ENCODE measurements at regions of chr6 and their contacts with region 1.

Region 1: GRCh38 chr6:32868257-32868788 is 14.3 kb downstream of the PSMB9 start:
- DNase-seq: peak; percentile 90
- H3K4me3 Mint-ChIP-seq: no peak overlapping the region
- H3K27ac Mint-ChIP-seq: no peak overlapping the region
- H3K4me1 Mint-ChIP-seq: peaks cover 33% of the 10 kb centered on the region
- H3K27me3 Mint-ChIP-seq: no peaks in the 10 kb centered on the region

Region 2: DNA sequence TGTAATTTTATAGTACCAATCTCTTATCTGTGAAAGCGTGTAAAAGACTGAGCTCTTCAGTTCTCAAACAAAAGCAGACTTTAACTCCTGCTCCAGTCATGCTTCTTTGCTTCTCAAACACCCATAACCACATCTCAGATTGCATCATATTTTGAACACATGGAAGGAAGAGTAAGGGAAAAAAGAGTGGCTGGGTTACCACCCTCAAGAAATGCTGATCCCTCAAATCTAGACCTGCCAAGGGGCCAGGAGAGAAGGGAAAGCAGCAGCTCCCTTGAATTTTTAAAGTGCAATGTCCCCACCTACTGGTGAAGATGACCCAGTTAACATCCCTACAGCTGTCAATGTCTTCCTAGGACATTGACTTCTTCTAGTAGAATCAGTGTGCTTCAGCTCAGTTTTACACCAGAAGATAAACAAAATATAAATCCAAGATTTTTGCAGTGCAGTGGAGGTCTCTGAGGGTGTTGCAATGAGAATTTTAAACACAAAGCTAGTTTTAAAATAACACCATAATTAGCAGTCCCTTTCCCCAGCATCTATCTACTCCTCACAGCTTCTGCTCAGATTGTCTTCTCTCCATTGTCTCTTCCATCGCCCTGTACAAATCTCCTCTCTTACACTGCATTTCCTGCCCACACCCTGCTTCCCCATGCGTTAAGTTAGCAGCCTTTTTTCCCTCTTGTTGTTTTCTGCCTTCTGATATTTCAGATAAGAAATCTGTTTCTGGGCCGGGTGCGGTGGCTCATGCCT is 82.4 kb before region 1 on chr6:
- CTCF ChIA-PET with region 1: interaction called, 29 read pairs
- POLR2A ChIA-PET with region 1: no interaction called
- intact Hi-C with region 1: no loop called
- DNase-seq: peak; percentile 21
- H3K4me3 Mint-ChIP-seq: no peak overlapping the region
- H3K27ac Mint-ChIP-seq: no peak overlapping the region
- H3K4me1 Mint-ChIP-seq: no peaks in the 10 kb centered on the region
- H3K27me3 Mint-ChIP-seq: peaks cover 42% of the 10 kb centered on the region

Region 3: DNA sequence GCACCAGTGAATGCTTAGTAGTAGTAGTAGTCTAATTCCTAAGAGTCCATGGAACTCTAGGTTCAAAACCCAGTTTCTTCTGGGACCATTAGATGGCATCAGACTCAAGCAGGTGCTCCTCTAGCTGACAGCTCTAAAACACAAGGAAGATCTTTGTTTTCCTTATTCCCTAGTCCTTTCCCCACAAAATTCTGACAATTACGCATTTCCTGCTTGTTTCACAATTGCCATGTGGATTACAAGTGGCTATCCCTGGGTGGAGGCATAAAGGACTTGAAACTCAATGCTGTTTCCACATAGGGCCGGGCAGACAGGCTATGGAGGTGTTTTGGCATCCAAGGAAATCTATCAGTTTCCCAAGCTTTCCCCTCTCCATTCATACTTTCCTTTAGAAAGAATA is 42.4 kb before region 1 on chr6:
- CTCF ChIA-PET with region 1: interaction called, 41 read pairs
- POLR2A ChIA-PET with region 1: interaction called, 4 read pairs
- intact Hi-C with region 1: no loop called
- DNase-seq: no peak
- H3K4me3 Mint-ChIP-seq: no peak overlapping the region
- H3K27ac Mint-ChIP-seq: no peak overlapping the region
- H3K4me1 Mint-ChIP-seq: peaks cover 32% of the 10 kb centered on the region
- H3K27me3 Mint-ChIP-seq: no peaks in the 10 kb centered on the region

Region 4: GRCh38 chr6:32879691-32880090 is 11.4 kb after region 1 on chr6:
- CTCF ChIA-PET with region 1: interaction called, 33 read pairs
- POLR2A ChIA-PET with region 1: no interaction called
- intact Hi-C with region 1: no loop called
- DNase-seq: no peak
- H3K4me3 Mint-ChIP-seq: no peak overlapping the region
- H3K27ac Mint-ChIP-seq: no peak overlapping the region
- H3K4me1 Mint-ChIP-seq: peaks cover 17% of the 10 kb centered on the region
- H3K27me3 Mint-ChIP-seq: no peaks in the 10 kb centered on the region

Region 5: GRCh38 chr6:32933636-32934085 is 65.3 kb after region 1 on chr6:
- CTCF ChIA-PET with region 1: interaction called, 18 read pairs
- POLR2A ChIA-PET with region 1: no interaction called
- intact Hi-C with region 1: no loop called
- DNase-seq: peak; percentile 84
- H3K4me3 Mint-ChIP-seq: no peak overlapping the region
- H3K27ac Mint-ChIP-seq: no peak overlapping the region
- H3K4me1 Mint-ChIP-seq: no peaks in the 10 kb centered on the region
- H3K27me3 Mint-ChIP-seq: no peaks in the 10 kb centered on the region

Measured in activated CD4-positive, alpha-beta memory T cell treated with anti-CD3 and anti-CD28 coated beads for 36 hours (primary cell).